Prostate gland (tissue), 2 donors: ENCODE measurements at regions of chr11 and their contacts with region 1.

Region 1: DNA sequence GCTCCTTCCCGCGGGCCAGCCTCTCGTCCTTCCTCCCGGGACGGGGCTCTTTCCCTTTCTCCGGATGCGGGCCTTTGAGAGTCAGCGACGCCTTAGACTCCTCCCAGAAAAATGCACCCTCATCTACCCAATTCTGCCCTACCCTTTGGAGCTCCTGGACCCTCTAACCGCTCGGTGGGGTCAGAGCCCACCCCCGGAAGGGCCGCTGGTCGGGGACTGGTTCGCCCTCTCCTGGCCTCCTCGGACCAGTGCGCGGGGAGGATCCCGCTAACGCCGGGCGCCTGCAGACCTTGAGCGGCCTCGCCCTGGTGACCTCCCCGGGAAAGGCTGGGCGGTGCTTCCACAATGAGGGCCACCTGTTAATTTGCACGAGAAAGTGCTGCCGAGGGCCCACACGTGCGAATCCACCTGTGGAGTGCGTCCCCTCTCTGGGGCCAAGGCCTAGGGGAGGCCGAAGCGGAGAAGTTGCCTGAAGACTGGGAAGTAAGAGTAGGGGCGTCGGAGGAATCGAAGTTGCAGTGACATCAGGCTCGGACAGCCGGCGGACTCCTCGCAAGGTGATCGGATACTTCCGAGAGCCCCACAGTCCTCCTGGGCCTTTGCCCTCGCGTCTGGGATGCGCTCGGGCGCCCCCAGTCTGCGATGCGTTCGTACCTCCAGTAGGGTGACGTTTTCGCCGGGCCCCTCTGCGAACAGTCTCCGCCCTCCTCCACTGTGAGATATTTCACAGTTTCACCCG is 61.5 kb downstream of the ENDOD1 start:
- DNase-seq: peak; percentile 93
- H3K4me3 ChIP-seq: peak overlapping the region; percentile 39 to 41
- H3K27ac ChIP-seq: peak overlapping the region; percentile 85 to 91
- H3K4me1 ChIP-seq: no peaks in the 10 kb centered on the region
- H3K27me3 ChIP-seq: no peaks in the 10 kb centered on the region
- CTCF ChIP-seq: peak; percentile 68 to 99 (median 88)
- POLR2A ChIP-seq: peak; percentile 68

Region 2: DNA sequence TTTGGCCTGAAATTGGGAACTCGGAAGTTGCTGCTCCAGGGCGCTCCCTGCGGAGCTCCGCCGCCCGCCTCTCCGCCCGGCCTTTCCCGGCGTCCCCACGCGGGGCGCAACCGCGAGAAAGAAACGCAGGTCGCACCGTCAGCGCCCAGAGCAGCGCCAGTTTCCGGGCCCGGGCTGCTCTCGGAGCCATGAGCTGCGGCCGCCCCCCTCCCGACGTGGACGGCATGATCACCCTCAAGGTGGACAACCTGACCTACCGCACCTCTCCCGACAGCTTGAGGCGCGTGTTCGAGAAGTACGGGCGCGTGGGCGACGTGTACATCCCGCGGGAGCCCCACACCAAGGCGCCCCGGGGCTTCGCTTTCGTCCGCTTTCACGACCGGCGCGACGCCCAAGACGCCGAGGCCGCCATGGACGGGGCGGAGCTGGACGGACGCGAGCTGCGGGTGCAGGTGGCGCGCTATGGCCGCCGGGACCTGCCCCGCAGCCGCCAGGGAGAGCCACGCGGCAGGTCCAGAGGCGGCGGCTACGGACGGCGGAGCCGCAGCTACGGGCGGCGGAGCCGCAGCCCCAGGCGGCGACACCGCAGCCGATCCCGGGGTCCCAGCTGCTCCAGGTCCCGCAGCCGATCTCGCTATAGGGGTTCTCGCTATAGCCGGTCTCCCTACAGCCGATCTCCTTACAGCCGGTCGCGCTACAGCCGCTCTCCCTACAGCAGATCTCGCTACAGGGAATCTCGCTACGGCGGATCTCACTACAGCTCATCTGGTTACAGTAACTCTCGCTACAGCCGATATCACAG is 83.9 kb before region 1 on chr11:
- intact Hi-C with region 1: loop called (anchors 2 kb)
- DNase-seq: peak; percentile 67
- H3K4me3 ChIP-seq: peak overlapping the region; percentile 85 to 86
- H3K27ac ChIP-seq: peak overlapping the region; percentile 97 to 98
- H3K4me1 ChIP-seq: no peaks in the 10 kb centered on the region
- H3K27me3 ChIP-seq: no peaks in the 10 kb centered on the region
- CTCF ChIP-seq: peak in 3 of 4 experiments; percentile 19 to 67 (median 58)
- POLR2A ChIP-seq: peak; percentile 48

Region 3: GRCh38 chr11:95218149-95218548 is 67.0 kb after region 1 on chr11:
- intact Hi-C with region 1: no loop called
- DNase-seq: no peak
- H3K4me3 ChIP-seq: no peak overlapping the region
- H3K27ac ChIP-seq: no peak overlapping the region
- H3K4me1 ChIP-seq: no peaks in the 10 kb centered on the region
- H3K27me3 ChIP-seq: no peaks in the 10 kb centered on the region
- CTCF ChIP-seq: no peak
- POLR2A ChIP-seq: no peak

Region 4: DNA sequence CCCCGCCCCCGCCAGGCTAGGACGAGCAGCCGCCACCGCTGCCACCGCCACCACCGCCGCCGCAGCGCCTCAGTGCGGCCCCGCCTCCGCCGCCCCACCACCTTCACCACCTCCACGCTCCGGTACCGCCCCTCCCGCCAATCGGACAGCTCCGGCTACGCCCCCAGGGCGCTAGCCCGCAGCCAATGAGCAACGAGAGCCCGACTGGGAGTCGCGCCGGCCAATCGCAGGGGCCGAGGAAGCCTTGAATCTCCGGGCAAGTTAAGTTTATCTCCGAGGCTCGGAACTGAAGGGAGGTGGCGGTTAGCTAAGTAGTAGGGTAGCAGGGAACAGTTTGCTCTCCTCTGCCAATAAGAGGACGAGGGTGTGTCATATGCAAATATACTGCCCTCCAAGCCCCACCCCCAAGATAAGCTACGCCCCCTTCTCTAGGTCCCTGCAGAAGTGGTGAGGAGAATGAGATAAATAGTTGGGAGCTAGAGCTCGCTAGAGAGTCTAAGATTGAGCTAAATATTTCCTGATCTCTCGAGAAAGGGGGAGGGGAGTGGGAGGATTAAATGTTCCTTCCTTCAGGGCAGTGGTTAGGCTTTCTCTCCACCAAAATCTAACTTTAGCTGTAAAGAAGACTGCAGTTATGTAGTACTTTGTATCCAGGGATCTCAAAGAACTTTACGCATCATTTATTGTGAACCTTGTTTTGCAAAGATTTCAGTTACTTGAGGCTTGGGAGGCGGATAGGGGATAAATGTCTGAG is 80.2 kb after region 1 on chr11 and contains the start of gene SESN3:
- intact Hi-C with region 1: loop called (anchors 2 kb)
- DNase-seq: peak; percentile 99
- H3K4me3 ChIP-seq: peak within 1 kb of the TSS; percentile 82 to 90
- H3K27ac ChIP-seq: peak within 1 kb of the TSS; percentile 84 to 88
- H3K4me1 ChIP-seq: no peaks in the 10 kb centered on the region
- H3K27me3 ChIP-seq: no peaks in the 10 kb centered on the region
- CTCF ChIP-seq: peak in 2 of 4 experiments; percentile 34 to 41
- POLR2A ChIP-seq: peak; percentile 81
- total RNA-seq, gene SESN3: 21.3 to 33.8 TPM

Region 5: DNA sequence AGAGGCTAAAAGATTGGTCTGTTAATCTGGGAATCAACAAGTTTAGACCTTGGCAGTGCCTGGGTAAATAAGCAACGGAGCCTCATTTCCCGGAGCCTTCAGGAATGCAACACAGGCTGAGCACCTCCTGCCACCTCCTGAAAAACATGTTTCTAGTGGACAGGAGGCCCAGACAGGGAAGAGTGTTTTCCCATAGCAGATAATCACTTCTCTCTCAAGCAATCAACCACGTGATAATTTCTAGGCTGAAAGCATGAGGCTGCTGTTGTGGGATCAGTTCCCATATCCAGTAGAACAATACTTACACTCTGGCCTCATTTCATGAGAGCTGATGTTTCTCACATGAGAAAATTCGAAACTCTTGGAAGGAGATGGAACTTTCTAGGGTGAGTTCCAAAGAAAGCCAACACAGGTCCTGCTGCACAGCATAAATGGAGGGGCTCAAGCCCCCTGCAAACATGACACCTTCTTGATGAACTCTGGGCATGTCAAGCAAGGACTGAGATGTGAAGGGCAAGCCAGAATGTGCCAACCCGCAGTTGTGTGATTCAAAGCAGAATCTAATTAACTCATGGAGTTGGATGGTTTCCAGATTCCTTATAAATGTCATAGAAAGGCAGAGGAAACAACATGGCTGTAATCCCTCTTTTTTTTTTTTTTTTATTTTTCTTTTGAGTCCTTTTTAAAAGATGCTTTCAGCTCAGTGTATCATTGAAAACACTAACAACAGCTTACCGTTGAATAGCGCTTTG is 308.4 kb after region 1 on chr11:
- intact Hi-C with region 1: no loop called
- DNase-seq: peak; percentile 61
- H3K4me3 ChIP-seq: no peak overlapping the region
- H3K27ac ChIP-seq: no peak overlapping the region
- H3K4me1 ChIP-seq: no peaks in the 10 kb centered on the region
- H3K27me3 ChIP-seq: no peaks in the 10 kb centered on the region
- CTCF ChIP-seq: no peak
- POLR2A ChIP-seq: no peak

Region 6: GRCh38 chr11:95705485-95706124 is 554.5 kb after region 1 on chr11:
- intact Hi-C with region 1: loop called (anchors 2 kb)
- DNase-seq: peak; percentile 91
- H3K4me3 ChIP-seq: no peak overlapping the region
- H3K27ac ChIP-seq: peak overlapping the region; percentile 35 to 40
- H3K4me1 ChIP-seq: no peaks in the 10 kb centered on the region
- H3K27me3 ChIP-seq: no peaks in the 10 kb centered on the region
- CTCF ChIP-seq: peak; percentile 74 to 95 (median 94)
- POLR2A ChIP-seq: no peak